CD4-positive, alpha-beta memory T cell (primary cell): ENCODE measurements at regions of chr15 and their contacts with region 1.

Region 1: GRCh38 chr15:68875377-68876116 is 54.8 kb upstream of the SPESP1 start:
- DNase-seq: peak; percentile 82 to 89 (median 84)
- H3K4me3 ChIP-seq: no peak overlapping the region
- H3K4me3 Mint-ChIP-seq: peak overlapping the region in 3 of 8 donors; percentile 36 to 71 (median 66)
- H3K27ac ChIP-seq: no peak overlapping the region
- H3K27ac Mint-ChIP-seq: peak overlapping the region in 1 of 7 donors; percentile 11
- H3K4me1 ChIP-seq: peaks cover 3% of the 10 kb centered on the region
- H3K4me1 Mint-ChIP-seq: peaks cover 0 to 6% (median 4%) of the 10 kb centered on the region in 4 donors
- H3K27me3 ChIP-seq: peaks cover 9% of the 10 kb centered on the region
- H3K27me3 Mint-ChIP-seq: peaks cover 12 to 26% of the 10 kb centered on the region in 2 donors

Region 2: DNA sequence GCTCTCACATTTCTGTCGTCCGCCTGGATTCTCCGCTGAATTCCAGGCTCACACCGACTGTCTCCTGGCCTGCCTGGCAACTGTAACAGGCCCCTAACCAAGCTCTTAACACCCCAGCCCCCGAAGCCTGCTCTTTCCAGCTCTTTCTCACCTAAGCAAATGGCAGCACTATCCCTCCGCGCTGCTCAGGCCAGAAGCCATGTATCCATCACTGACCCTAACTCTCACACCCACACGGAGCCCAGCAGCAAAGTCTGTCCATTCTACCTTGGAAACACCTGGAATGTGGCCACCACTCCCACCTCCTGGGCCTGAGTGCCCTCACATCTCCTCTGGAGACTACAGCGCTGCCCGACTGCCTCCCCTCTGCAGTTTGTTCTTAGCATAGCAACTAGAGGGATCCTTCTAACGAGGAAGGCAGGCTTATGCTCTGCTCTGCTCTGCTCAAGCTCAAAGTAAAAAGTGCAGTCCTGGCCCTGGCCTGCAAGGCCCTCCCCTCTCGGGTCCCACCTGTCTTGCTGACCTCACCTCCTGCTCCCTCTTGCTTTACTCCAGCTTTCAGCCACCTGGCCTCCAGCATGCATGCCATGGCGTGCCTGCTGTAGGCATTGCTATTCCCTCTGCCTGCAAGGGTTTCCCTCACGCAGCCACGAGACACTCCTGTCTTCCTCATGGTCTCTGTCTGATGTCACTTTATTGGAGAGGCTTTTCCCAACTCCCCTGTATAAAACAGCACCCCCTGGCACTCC is 570.8 kb before region 1 on chr15:
- CTCF ChIA-PET with region 1: no interaction called
- POLR2A ChIA-PET with region 1: no interaction called
- intact Hi-C with region 1: loop called (anchors 2 kb)
- DNase-seq: no peak
- H3K4me3 ChIP-seq: no peak overlapping the region
- H3K4me3 Mint-ChIP-seq: no peak overlapping the region
- H3K27ac ChIP-seq: no peak overlapping the region
- H3K27ac Mint-ChIP-seq: peak overlapping the region in 2 of 7 donors; percentile 42 to 67
- H3K4me1 ChIP-seq: peaks cover 4% of the 10 kb centered on the region
- H3K4me1 Mint-ChIP-seq: peaks cover 8 to 25% (median 14%) of the 10 kb centered on the region in 4 donors
- H3K27me3 ChIP-seq: no peaks in the 10 kb centered on the region
- H3K27me3 Mint-ChIP-seq: peaks cover 0 to 4% of the 10 kb centered on the region in 2 donors

Region 3: GRCh38 chr15:68559345-68560310 is 315.9 kb before region 1 on chr15:
- CTCF ChIA-PET with region 1: interaction called, 46 read pairs
- POLR2A ChIA-PET with region 1: interaction called, 3 read pairs
- intact Hi-C with region 1: no loop called
- DNase-seq: peak in 4 of 5 donors; percentile 65 to 67 (median 66)
- H3K4me3 ChIP-seq: peak overlapping the region; percentile 17 to 32
- H3K4me3 Mint-ChIP-seq: peak overlapping the region; percentile 75 to 91 (median 82)
- H3K27ac ChIP-seq: no peak overlapping the region
- H3K27ac Mint-ChIP-seq: peak overlapping the region in 1 of 7 donors; percentile 30
- H3K4me1 ChIP-seq: peaks cover 15% of the 10 kb centered on the region
- H3K4me1 Mint-ChIP-seq: peaks cover 11 to 23% (median 15%) of the 10 kb centered on the region in 4 donors
- H3K27me3 ChIP-seq: no peaks in the 10 kb centered on the region
- H3K27me3 Mint-ChIP-seq: peaks cover 33 to 50% of the 10 kb centered on the region in 2 donors

Region 4: DNA sequence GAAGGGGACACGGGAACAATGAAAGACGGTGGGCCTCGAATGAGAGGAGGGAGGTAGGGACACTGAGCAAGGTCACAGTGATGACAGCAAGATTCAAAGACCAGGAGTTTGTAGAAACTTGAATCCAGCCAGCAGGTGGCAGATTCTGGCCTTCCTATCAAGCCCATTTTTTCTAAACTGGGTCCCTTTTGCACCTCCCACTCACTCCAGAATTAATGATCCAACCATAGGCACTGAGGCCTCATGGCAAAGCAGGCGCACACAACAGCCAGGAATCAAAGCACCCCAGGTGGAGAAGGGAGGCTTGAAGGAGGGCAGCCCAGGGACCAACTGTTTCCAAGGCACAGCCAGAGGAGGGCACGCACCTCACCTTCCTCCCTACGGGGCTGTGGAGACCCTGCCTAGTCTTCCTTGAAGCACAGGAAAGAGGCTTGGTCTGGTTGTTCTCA is 145.1 kb before region 1 on chr15:
- CTCF ChIA-PET with region 1: interaction called, 49 read pairs
- POLR2A ChIA-PET with region 1: no interaction called
- intact Hi-C with region 1: loop called (anchors 1 kb)
- DNase-seq: peak in 4 of 5 donors; percentile 6 to 16 (median 12)
- H3K4me3 ChIP-seq: no peak overlapping the region
- H3K4me3 Mint-ChIP-seq: no peak overlapping the region
- H3K27ac ChIP-seq: no peak overlapping the region
- H3K27ac Mint-ChIP-seq: no peak overlapping the region
- H3K4me1 ChIP-seq: no peaks in the 10 kb centered on the region
- H3K4me1 Mint-ChIP-seq: peaks cover 0 to 3% (median 1%) of the 10 kb centered on the region in 4 donors
- H3K27me3 ChIP-seq: no peaks in the 10 kb centered on the region
- H3K27me3 Mint-ChIP-seq: peaks cover 0 to 2% of the 10 kb centered on the region in 2 donors

Region 5: DNA sequence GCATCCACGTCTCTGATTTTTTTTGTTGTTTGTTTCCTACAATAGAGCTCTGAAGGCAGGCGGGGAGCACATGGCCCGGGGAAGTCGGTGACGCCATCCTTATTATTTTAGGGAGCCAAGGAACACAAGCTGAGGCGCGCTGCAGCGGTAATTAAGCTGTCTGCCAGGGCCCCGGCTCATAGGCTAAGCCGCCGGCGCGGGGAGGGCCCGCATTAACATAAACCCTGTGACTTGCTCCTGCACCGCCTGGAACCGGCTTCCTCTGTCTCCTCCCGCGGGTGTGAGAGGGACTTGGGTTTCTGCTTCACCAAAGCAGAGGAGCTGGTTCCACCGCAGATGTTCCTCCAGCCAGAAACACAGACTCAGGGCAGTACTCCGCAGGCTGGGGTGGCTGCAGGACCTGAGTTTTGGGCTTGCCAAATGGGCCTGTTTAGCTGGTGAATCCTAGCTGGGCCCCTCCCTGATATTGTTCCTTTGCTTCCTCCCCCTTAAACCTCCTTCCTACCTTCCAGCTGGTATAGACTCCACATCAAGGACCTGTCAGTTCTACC is 80.2 kb before region 1 on chr15:
- CTCF ChIA-PET with region 1: interaction called, 14 read pairs
- POLR2A ChIA-PET with region 1: no interaction called
- intact Hi-C with region 1: no loop called
- DNase-seq: peak; percentile 57 to 82 (median 62)
- H3K4me3 ChIP-seq: no peak overlapping the region
- H3K4me3 Mint-ChIP-seq: peak overlapping the region; percentile 2 to 80 (median 70)
- H3K27ac ChIP-seq: peak overlapping the region; percentile 32
- H3K27ac Mint-ChIP-seq: peak overlapping the region; percentile 73 to 91 (median 85)
- H3K4me1 ChIP-seq: peaks cover 100% of the 10 kb centered on the region
- H3K4me1 Mint-ChIP-seq: peaks cover 71 to 99% (median 89%) of the 10 kb centered on the region in 4 donors
- H3K27me3 ChIP-seq: no peaks in the 10 kb centered on the region
- H3K27me3 Mint-ChIP-seq: no peaks in the 10 kb centered on the region

Region 6: GRCh38 chr15:69172828-69173227 is 297.3 kb after region 1 on chr15:
- CTCF ChIA-PET with region 1: no interaction called
- POLR2A ChIA-PET with region 1: no interaction called
- intact Hi-C with region 1: no loop called
- DNase-seq: no peak
- H3K4me3 ChIP-seq: no peak overlapping the region
- H3K4me3 Mint-ChIP-seq: no peak overlapping the region
- H3K27ac ChIP-seq: no peak overlapping the region
- H3K27ac Mint-ChIP-seq: no peak overlapping the region
- H3K4me1 ChIP-seq: no peaks in the 10 kb centered on the region
- H3K4me1 Mint-ChIP-seq: peaks cover 0 to 6% (median 2%) of the 10 kb centered on the region in 4 donors
- H3K27me3 ChIP-seq: no peaks in the 10 kb centered on the region
- H3K27me3 Mint-ChIP-seq: no peaks in the 10 kb centered on the region